ENCODE measurements at regions of chr5 and their contacts with region 1.

Region 1: GRCh38 chr5:80654391-80655230 is at the starts of genes DHFR and MSH3:
- DNase-seq: peak; percentile 73 to 91 (median 87)
- ATAC-seq: peak; percentile 86
- H3K4me3 ChIP-seq: peak within 1 kb of the TSS; percentile 91
- H3K4me3 Mint-ChIP-seq: peak within 1 kb of the TSS; percentile 82 to 98 (median 90)
- H3K27ac ChIP-seq: peak within 1 kb of the TSS; percentile 82
- H3K27ac Mint-ChIP-seq: peak within 1 kb of the TSS; percentile 89 to 97 (median 96)
- H3K4me1 ChIP-seq: peaks cover 24 to 28% of the 10 kb centered on the region in 2 donors
- H3K4me1 Mint-ChIP-seq: peaks cover 10 to 40% (median 32%) of the 10 kb centered on the region in 7 donors
- H3K27me3 ChIP-seq: no peaks in the 10 kb centered on the region
- H3K27me3 Mint-ChIP-seq: no peaks in the 10 kb centered on the region
- total RNA-seq, gene DHFR: 6.9 to 68.9 (median 17.0) TPM
- total RNA-seq, gene MSH3: 12.0 to 20.9 (median 16.7) TPM

Region 2: GRCh38 chr5:79514391-79515105 is 1140.1 kb before region 1 on chr5:
- CTCF ChIA-PET with region 1: no interaction called
- POLR2A ChIA-PET with region 1: no interaction called
- intact Hi-C with region 1: loop called (anchors 2 kb)
- DNase-seq: peak; percentile 80 to 94 (median 91)
- ATAC-seq: peak; percentile 91
- H3K4me3 ChIP-seq: peak overlapping the region; percentile 71
- H3K4me3 Mint-ChIP-seq: peak overlapping the region; percentile 88 to 99 (median 98)
- H3K27ac ChIP-seq: peak overlapping the region; percentile 97
- H3K27ac Mint-ChIP-seq: peak overlapping the region; percentile 93 to 99 (median 98)
- H3K4me1 ChIP-seq: peaks cover 4 to 26% of the 10 kb centered on the region in 2 donors
- H3K4me1 Mint-ChIP-seq: peaks cover 6 to 53% (median 40%) of the 10 kb centered on the region in 7 donors
- H3K27me3 ChIP-seq: peaks cover 0 to 7% of the 10 kb centered on the region in 2 donors
- H3K27me3 Mint-ChIP-seq: peaks cover 0 to 27% (median 23%) of the 10 kb centered on the region in 5 donors

Region 3: GRCh38 chr5:79990598-79991507 is 663.8 kb before region 1 on chr5 and contains the start of gene MTX3:
- CTCF ChIA-PET with region 1: no interaction called
- POLR2A ChIA-PET with region 1: no interaction called
- intact Hi-C with region 1: loop called (anchors 1 to 2 kb)
- DNase-seq: peak; percentile 65 to 85 (median 82)
- ATAC-seq: peak; percentile 97
- H3K4me3 ChIP-seq: peak within 1 kb of the TSS; percentile 80
- H3K4me3 Mint-ChIP-seq: peak within 1 kb of the TSS; percentile 76 to 93 (median 88)
- H3K27ac ChIP-seq: peak within 1 kb of the TSS; percentile 75
- H3K27ac Mint-ChIP-seq: peak within 1 kb of the TSS; percentile 82 to 95 (median 92)
- H3K4me1 ChIP-seq: peaks cover 17 to 18% of the 10 kb centered on the region in 2 donors
- H3K4me1 Mint-ChIP-seq: peaks cover 17 to 47% (median 36%) of the 10 kb centered on the region in 7 donors
- H3K27me3 ChIP-seq: no peaks in the 10 kb centered on the region
- H3K27me3 Mint-ChIP-seq: peaks cover 0 to 13% (median 8%) of the 10 kb centered on the region in 5 donors
- total RNA-seq, gene MTX3: 12.9 to 31.0 (median 24.4) TPM

Region 4: DNA sequence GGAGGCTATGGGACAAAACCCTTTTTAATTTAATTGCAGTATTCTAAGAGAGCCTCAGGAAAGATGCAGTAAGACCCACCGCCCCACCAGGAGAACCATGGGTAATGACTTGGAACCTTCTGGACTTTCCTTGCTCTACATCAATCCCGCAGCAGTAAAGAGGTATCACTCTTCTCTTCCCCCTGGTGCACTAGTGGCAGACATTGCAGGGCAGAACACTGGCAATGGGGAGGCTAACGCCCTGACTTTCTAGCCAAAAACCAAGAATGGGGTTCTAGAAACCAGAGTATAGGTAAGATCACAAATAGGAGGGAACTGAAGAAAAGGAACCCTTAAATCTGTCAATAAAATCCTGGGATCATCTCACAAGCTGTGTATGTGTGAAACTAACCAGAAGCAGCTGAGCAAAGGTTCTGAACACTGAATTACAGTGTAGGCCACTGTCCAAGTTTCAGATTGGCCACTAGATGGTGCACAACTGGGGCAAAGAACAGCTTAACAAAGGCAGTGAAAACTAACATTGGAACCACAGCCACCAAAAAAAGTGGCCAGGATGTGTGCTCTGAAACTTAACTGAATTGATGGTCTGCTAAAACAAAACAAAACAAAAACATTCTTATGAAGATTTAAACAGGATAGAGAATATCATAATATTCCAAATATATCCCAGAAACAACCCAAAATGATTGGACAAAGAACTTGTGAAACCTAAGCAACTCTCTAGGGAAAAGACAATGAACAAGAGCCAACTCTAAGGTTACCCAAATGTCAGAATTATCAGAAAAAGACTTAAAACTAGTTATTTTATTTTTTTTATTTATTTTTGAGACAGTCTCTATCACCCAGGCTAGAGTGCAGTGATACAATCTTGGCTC is 173.4 kb before region 1 on chr5:
- CTCF ChIA-PET with region 1: no interaction called
- POLR2A ChIA-PET with region 1: no interaction called
- intact Hi-C with region 1: loop called in 1 of 2 experiments (anchors 5 kb)
- DNase-seq: peak in 5 of 9 donors; percentile 18 to 41 (median 30)
- ATAC-seq: peak; percentile 85
- H3K4me3 ChIP-seq: no peak overlapping the region
- H3K4me3 Mint-ChIP-seq: no peak overlapping the region
- H3K27ac ChIP-seq: no peak overlapping the region
- H3K27ac Mint-ChIP-seq: peak overlapping the region in 1 of 9 donors; percentile 47
- H3K4me1 ChIP-seq: no peaks in the 10 kb centered on the region
- H3K4me1 Mint-ChIP-seq: peaks cover 0 to 7% (median 0%) of the 10 kb centered on the region in 7 donors
- H3K27me3 ChIP-seq: no peaks in the 10 kb centered on the region
- H3K27me3 Mint-ChIP-seq: peaks cover 0 to 3% (median 0%) of the 10 kb centered on the region in 5 donors

Region 5: DNA sequence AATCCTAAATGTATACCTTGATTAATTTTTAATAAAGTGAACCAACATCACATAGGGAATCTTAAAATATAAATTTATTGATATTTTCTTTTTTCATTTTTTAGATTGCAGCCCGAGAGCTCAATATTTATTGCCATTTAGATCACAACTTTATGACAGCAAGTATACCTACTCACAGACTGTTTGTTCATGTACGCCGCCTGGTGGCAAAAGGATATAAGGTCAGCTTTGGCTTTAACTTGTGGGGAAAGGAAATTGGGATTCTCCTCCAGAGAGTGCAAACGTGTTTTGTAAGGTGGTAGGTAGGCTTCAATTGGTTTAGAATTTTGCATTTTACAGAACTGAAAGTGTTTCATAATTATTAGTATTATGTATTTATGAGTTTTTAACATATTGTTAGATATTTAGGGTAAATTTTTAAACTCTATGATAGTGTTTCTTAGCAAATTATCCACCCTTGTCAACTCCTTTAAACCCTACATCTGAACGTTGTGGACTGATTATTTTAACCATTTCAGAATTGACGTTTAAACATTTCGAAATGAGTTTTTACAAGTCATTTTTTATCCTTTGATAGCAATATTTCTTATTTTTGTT is 17.6 kb after region 1 on chr5:
- CTCF ChIA-PET with region 1: interaction called, 4 read pairs
- POLR2A ChIA-PET with region 1: interaction called, 4 read pairs
- intact Hi-C with region 1: loop called (anchors 1 kb)
- DNase-seq: peak; percentile 26 to 62 (median 48)
- ATAC-seq: peak; percentile 85
- H3K4me3 ChIP-seq: no peak overlapping the region
- H3K4me3 Mint-ChIP-seq: no peak overlapping the region
- H3K27ac ChIP-seq: no peak overlapping the region
- H3K27ac Mint-ChIP-seq: no peak overlapping the region
- H3K4me1 ChIP-seq: no peaks in the 10 kb centered on the region
- H3K4me1 Mint-ChIP-seq: peaks cover 0 to 19% (median 4%) of the 10 kb centered on the region in 7 donors
- H3K27me3 ChIP-seq: no peaks in the 10 kb centered on the region
- H3K27me3 Mint-ChIP-seq: no peaks in the 10 kb centered on the region

Region 6: GRCh38 chr5:80960531-80961375 is 306.1 kb after region 1 on chr5:
- CTCF ChIA-PET with region 1: no interaction called
- POLR2A ChIA-PET with region 1: no interaction called
- intact Hi-C with region 1: loop called in 1 of 2 experiments (anchors 2 kb)
- DNase-seq: peak in 8 of 9 donors; percentile 23 to 67 (median 50)
- ATAC-seq: peak; percentile 53
- H3K4me3 ChIP-seq: peak overlapping the region; percentile 85
- H3K4me3 Mint-ChIP-seq: peak overlapping the region; percentile 87 to 99 (median 94)
- H3K27ac ChIP-seq: peak overlapping the region; percentile 70
- H3K27ac Mint-ChIP-seq: peak overlapping the region; percentile 79 to 98 (median 88)
- H3K4me1 ChIP-seq: peaks cover 22 to 35% of the 10 kb centered on the region in 2 donors
- H3K4me1 Mint-ChIP-seq: peaks cover 35 to 76% (median 63%) of the 10 kb centered on the region in 7 donors
- H3K27me3 ChIP-seq: no peaks in the 10 kb centered on the region
- H3K27me3 Mint-ChIP-seq: peaks cover 0 to 12% (median 5%) of the 10 kb centered on the region in 5 donors

Region 7: DNA sequence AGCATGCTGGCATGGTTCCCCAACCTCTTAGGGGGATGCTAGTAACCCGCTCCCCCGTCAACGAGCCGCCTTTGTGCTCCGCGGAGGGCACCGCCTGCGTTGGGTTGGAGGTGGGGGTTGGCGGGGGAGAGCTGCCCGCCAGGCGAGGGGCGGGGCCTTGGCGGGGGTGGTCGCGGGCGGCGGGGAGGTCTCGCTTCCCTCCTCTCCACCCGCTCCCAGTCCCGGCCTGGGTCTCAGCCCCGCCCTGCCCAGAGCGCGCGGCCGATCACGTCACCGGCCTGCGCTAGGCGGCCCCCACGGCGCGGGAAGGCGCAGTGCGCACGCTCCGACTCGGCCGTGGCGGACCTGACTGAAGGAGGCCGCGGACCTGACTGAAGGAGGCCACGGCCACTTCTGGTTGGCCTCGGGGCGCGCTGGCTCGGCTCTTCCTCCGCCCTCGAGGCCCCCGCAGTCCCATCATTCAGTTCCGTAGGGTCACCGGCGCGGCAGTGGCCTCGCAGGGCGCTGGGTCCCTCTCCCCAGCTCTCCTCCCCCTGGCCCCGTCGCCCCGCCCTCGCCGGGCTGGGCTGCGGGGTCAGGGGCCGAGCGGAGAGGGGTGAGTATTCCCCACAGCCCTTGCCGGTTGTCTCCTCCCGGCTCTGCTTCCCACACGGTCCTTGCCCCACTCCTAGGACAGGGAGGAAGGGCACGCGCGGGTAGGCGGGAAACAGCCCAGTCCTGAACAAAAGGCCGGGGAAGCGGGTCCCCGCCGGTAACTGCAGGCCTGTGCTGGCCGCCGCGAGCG is 1317.3 kb after region 1 on chr5 and contains the start of gene ATG10:
- CTCF ChIA-PET with region 1: no interaction called
- POLR2A ChIA-PET with region 1: no interaction called
- intact Hi-C with region 1: loop called in 1 of 2 experiments (anchors 5 kb)
- DNase-seq: peak; percentile 78 to 93 (median 84)
- ATAC-seq: peak; percentile 95
- H3K4me3 ChIP-seq: peak within 1 kb of the TSS; percentile 67
- H3K4me3 Mint-ChIP-seq: peak within 1 kb of the TSS; percentile 91 to 100 (median 97)
- H3K27ac ChIP-seq: peak within 1 kb of the TSS; percentile 97
- H3K27ac Mint-ChIP-seq: peak within 1 kb of the TSS; percentile 95 to 99 (median 99)
- H3K4me1 ChIP-seq: peaks cover 5 to 10% of the 10 kb centered on the region in 2 donors
- H3K4me1 Mint-ChIP-seq: peaks cover 9 to 40% (median 33%) of the 10 kb centered on the region in 7 donors
- H3K27me3 ChIP-seq: no peaks in the 10 kb centered on the region
- H3K27me3 Mint-ChIP-seq: no peaks in the 10 kb centered on the region
- total RNA-seq, gene ATG10: 6.4 to 9.6 (median 8.2) TPM

Measured in naive thymus-derived CD4-positive, alpha-beta T cell (primary cell).